Mammary epithelial cell (primary cell): ENCODE measurements at regions of chr3 and their contacts with region 1.

Region 1: DNA sequence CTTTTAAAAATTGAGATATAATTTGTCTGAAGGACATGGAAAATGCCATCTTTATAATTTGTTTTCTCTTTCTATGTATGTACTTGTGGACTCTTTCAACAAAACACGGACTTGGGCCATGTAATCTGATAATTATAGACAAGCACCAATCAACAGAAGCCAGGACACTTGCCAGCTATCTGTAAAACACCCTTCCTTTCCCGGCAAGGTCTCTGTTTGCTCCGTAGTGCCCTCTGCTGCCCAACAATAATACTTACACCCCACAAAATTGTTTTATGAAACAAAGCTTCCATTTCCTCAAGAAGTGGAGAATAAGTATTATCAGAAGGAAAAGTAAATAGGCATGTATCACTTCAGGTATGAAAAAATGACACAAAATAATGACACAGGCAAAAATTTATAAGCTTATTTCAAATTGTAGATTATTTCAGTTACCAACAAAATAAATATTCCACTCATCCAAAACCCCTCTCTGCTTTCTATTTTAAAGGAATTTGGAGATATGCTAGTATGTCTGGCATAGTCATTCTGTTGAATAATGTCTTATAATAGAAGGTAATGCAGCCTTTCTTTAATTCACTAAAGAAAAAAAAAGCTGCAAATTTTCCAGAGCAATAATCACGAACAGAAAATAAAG is 32.8 kb downstream of the MYH15 start:
- DNase-seq: peak; percentile 48
- H3K4me3 ChIP-seq: no peak overlapping the region
- H3K27ac ChIP-seq: no peak overlapping the region
- H3K4me1 ChIP-seq: peaks cover 2% of the 10 kb centered on the region
- H3K27me3 ChIP-seq: no peaks in the 10 kb centered on the region
- CTCF ChIP-seq: peak; percentile 73 to 75

Region 2: GRCh38 chr3:107938143-107938542 is 539.5 kb before region 1 on chr3:
- CTCF ChIA-PET with region 1: interaction called, 3 read pairs
- dilution Hi-C with region 1: no loop called
- in situ Hi-C with region 1: no loop called
- intact Hi-C with region 1: loop called (anchors 1 kb)
- DNase-seq: peak; percentile 46
- H3K4me3 ChIP-seq: no peak overlapping the region
- H3K27ac ChIP-seq: no peak overlapping the region
- H3K4me1 ChIP-seq: peaks cover 5% of the 10 kb centered on the region
- H3K27me3 ChIP-seq: no peaks in the 10 kb centered on the region
- CTCF ChIP-seq: peak; percentile 41 to 72

Region 3: DNA sequence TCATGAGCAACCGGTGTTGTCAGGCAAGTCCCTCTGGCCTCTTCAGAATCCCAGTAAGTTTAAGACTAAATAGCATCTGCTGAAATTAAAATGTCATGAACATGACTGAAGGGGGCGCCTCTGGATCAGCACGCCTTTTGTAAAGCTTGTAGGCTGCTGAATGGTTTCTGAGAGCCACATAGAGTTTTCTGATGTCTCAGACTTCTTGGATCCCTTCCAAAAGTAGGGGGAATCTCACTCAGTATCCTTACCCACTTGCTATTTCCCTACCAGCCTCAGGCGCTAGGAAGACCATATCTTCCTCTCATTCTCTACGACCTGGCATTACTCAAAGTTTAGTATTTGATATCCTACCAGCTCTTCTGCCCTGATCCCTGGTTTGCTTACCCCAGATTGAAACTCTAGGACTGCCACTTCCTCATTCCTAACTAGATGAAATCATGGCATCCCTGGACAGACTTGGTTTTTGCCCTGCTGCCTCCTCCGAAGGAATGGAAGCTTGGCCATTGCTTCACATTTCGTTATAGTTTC is 324.1 kb before region 1 on chr3:
- CTCF ChIA-PET with region 1: interaction called, 4 read pairs
- dilution Hi-C with region 1: no loop called
- in situ Hi-C with region 1: no loop called
- intact Hi-C with region 1: loop called (anchors 1 kb)
- DNase-seq: peak; percentile 60
- H3K4me3 ChIP-seq: no peak overlapping the region
- H3K27ac ChIP-seq: no peak overlapping the region
- H3K4me1 ChIP-seq: no peaks in the 10 kb centered on the region
- H3K27me3 ChIP-seq: no peaks in the 10 kb centered on the region
- CTCF ChIP-seq: peak; percentile 39 to 58

Region 4: GRCh38 chr3:108342837-108343478 is 134.7 kb before region 1 on chr3:
- CTCF ChIA-PET with region 1: no interaction called
- dilution Hi-C with region 1: no loop called
- in situ Hi-C with region 1: no loop called
- intact Hi-C with region 1: loop called (anchors 10 kb)
- DNase-seq: peak; percentile 19
- H3K4me3 ChIP-seq: no peak overlapping the region
- H3K27ac ChIP-seq: no peak overlapping the region
- H3K4me1 ChIP-seq: no peaks in the 10 kb centered on the region
- H3K27me3 ChIP-seq: peaks cover 2% of the 10 kb centered on the region
- CTCF ChIP-seq: no peak

Region 5: DNA sequence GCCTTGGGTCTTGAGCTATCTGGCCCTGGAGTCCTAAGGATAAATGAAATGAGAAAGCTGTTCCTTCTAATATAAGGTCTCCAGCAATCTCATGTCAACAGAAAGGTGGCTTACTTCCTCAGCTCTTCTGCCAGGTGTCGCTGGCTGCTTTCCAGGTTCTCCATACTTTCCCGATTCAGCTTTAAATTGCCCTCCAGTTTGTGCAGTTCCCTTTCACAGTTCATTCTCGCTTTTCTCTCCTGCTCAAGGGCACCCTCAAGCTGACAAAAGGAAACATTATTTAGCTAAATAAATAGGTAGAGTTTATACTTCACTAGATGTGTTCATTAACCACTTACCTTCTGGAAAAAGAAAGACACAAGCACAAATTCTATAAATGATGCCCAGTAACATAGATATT is 40.2 kb before region 1 on chr3:
- CTCF ChIA-PET with region 1: no interaction called
- dilution Hi-C with region 1: no loop called
- in situ Hi-C with region 1: no loop called
- intact Hi-C with region 1: no loop called
- DNase-seq: no peak
- H3K4me3 ChIP-seq: no peak overlapping the region
- H3K27ac ChIP-seq: no peak overlapping the region
- H3K4me1 ChIP-seq: no peaks in the 10 kb centered on the region
- H3K27me3 ChIP-seq: no peaks in the 10 kb centered on the region
- CTCF ChIP-seq: peak in 1 of 2 donors; percentile 10